GM12878 (cell line): ENCODE measurements at regions of chr17 and their contacts with region 1.

Region 1: DNA sequence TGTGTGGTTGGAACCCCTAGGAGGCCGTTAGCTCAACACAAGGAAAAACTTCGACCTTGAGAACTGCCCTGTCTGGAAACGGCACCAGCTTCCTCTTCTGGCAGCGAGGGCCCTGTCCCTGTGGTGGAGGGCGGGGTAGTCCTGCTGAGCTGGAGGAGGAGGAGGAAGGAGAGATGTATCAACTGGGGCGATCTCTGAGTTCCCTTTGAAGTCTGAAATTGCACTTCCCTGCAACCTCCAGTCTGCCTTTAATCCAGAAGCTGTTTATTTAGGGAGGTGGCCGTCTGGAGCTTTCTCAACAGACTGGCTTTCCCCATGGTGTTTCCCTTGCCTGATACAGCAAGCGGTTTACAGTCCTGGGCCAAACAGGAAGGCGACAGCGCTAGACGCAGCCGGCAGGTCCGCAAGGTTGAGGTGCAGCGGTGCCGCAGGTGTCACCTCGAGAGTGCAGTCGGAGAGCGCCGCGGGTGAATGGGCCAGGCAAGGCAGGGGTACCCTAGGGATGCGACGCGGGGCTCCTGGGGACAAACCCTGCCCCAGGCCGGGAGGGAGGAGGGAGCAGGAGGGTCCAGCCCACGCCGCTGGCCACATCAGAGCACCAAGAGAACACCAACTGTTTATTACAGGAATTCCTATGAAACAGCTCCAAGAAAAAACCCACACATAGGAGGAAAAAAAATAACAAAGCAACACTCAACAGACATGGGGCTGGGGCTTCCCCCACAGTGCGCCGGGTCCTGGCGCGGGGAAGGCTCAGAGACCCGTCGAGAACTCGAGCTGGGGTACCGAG is 11.4 kb upstream of the MRPS23 start:
- DNase-seq: no peak
- ATAC-seq: peak; percentile 67
- H3K4me3 ChIP-seq: peak overlapping the region; percentile 38; the same call in 1 of the 2 replicates
- H3K27ac ChIP-seq: no peak overlapping the region
- H3K4me1 ChIP-seq: peaks cover 3% of the 10 kb centered on the region; the same call in 1 of the 2 replicates
- H3K27me3 ChIP-seq: no peaks in the 10 kb centered on the region; a peak in 2 of 4 replicates
- CTCF ChIP-seq: no peak
- EP300 ChIP-seq: no peak
- POLR2A ChIP-seq: no peak
- RAD21 ChIP-seq: no peak

Region 2: GRCh38 chr17:57761887-57762286 is 99.3 kb before region 1 on chr17:
- CTCF ChIA-PET with region 1: no interaction called
- POLR2A ChIA-PET with region 1: no interaction called
- RAD21 ChIA-PET with region 1: no interaction called
- SMC1A ChIA-PET with region 1: no interaction called
- in situ Hi-C with region 1: no loop called
- intact Hi-C with region 1: no loop called
- DNase-seq: no peak
- ATAC-seq: no peak
- H3K4me3 ChIP-seq: no peak overlapping the region
- H3K27ac ChIP-seq: no peak overlapping the region
- H3K4me1 ChIP-seq: no peaks in the 10 kb centered on the region
- H3K27me3 ChIP-seq: peaks cover 0 to 2% of the 10 kb centered on the region in 2 experiments; a peak in 2 of 4 replicates
- CTCF ChIP-seq: no peak
- EP300 ChIP-seq: no peak
- POLR2A ChIP-seq: no peak
- RAD21 ChIP-seq: no peak

Region 3: DNA sequence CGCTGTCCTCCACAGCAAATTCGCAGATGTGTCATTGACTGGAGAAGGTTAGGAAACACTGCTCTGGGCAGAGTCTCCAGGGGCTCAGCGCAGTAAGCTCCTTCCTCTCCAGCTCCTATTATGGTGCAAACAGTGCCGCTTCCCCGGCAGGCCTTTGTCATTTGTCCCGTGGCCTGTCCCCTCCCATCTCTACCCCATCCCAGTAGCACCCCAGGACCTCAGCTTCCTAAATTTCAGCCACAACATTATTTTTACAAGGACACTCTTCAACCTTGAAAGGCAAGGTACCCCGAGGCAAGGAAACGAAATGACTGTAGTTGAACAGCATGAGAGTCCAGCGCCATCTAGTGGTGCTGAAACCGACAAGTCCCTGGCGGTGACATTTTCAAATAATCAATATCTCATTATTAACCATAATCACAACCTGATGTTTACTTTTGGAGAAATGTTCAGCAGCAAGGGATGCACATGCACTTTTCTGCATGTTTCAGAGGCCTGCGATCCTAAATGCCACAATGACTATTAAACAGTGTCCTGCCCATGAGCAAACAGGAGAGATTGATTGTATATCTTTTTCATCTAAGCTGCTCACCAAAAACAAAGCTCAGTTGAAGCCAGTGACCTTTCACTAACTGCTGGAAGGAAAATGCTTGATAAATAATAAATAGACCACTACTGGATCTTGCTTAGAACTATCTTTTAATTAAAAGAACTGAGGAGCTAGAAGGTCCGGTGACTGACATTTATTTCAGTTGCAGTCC is 27.8 kb before region 1 on chr17:
- CTCF ChIA-PET with region 1: interaction called, 21 read pairs
- POLR2A ChIA-PET with region 1: interaction called, 5 read pairs
- RAD21 ChIA-PET with region 1: no interaction called
- SMC1A ChIA-PET with region 1: no interaction called
- in situ Hi-C with region 1: no loop called
- intact Hi-C with region 1: no loop called
- DNase-seq: no peak
- ATAC-seq: peak; percentile 95
- H3K4me3 ChIP-seq: 0 out of 2 replicates have a peak overlapping the region, but pooled peaks have one; percentile 4
- H3K27ac ChIP-seq: no peak overlapping the region
- H3K4me1 ChIP-seq: peaks cover 5% of the 10 kb centered on the region; the same call in 1 of the 2 replicates
- H3K27me3 ChIP-seq: no peaks in the 10 kb centered on the region
- CTCF ChIP-seq: peak; percentile 87 to 94 (median 92)
- EP300 ChIP-seq: no peak
- POLR2A ChIP-seq: no peak
- RAD21 ChIP-seq: peak; percentile 74

Region 4: GRCh38 chr17:57875309-57876115 is 14.3 kb after region 1 on chr17:
- CTCF ChIA-PET with region 1: interaction called, 12 read pairs
- POLR2A ChIA-PET with region 1: interaction called, 3 read pairs
- RAD21 ChIA-PET with region 1: interaction called, 20 read pairs
- SMC1A ChIA-PET with region 1: interaction called, 12 read pairs
- in situ Hi-C with region 1: no loop called
- intact Hi-C with region 1: no loop called
- DNase-seq: no peak
- ATAC-seq: no peak
- H3K4me3 ChIP-seq: no peak overlapping the region
- H3K27ac ChIP-seq: no peak overlapping the region
- H3K4me1 ChIP-seq: peaks cover 8% of the 10 kb centered on the region
- H3K27me3 ChIP-seq: peaks cover 0 to 1% of the 10 kb centered on the region in 2 experiments; a peak in 2 of 4 replicates
- CTCF ChIP-seq: no peak
- EP300 ChIP-seq: no peak
- POLR2A ChIP-seq: no peak
- RAD21 ChIP-seq: 0 out of 2 replicates have a peak, but pooled peaks have one; percentile 5

Region 5: GRCh38 chr17:57902800-57903759 is 41.9 kb after region 1 on chr17:
- CTCF ChIA-PET with region 1: interaction called, 16 read pairs
- POLR2A ChIA-PET with region 1: no interaction called
- RAD21 ChIA-PET with region 1: interaction called, 19 read pairs
- SMC1A ChIA-PET with region 1: interaction called, 10 read pairs
- in situ Hi-C with region 1: no loop called
- intact Hi-C with region 1: no loop called
- DNase-seq: peak; percentile 89
- ATAC-seq: peak; percentile 82
- H3K4me3 ChIP-seq: peak overlapping the region; percentile 35; the same call in 1 of the 2 replicates
- H3K27ac ChIP-seq: peak overlapping the region; percentile 85
- H3K4me1 ChIP-seq: peaks cover 58% of the 10 kb centered on the region
- H3K27me3 ChIP-seq: no peaks in the 10 kb centered on the region
- CTCF ChIP-seq: no peak
- EP300 ChIP-seq: peak; percentile 53 to 77; a peak in 3 of 4 replicates
- POLR2A ChIP-seq: 0 out of 2 replicates have a peak, but pooled peaks have one; percentile 27
- RAD21 ChIP-seq: peak; percentile 26; the same call in 1 of the 2 replicates

Region 6: DNA sequence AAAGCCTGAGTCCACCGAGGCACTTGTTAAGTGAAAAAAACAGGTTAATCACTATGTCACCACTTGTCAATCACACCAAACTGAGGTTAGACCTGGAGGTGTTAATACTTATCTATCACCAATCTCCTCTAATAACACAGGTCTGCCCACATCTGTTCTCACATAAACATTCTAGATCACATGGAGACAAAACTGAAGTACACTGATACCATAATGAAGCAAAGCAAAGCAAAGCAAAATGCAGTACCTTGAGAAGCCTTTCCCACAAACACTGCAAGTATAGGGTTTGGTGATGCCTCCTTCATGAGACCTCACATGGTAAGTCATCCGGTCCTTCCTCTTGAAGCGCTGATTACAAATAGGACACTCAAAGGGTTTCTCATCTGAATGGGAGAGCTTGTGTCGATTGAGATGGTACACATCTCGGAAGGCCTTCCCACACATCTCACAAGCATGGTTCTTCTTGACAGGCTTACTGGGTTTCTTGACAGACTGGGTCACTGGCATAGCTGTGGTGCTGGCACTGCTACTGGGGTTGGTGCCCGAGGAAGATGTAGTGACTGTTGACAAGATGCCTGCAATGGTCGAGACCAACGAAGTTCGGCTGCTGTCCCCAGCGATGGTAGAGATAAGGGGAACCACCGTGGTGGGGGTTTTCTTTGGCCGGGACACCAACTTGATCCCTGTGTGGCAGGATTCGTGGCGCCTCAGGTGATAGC is 121.4 kb after region 1 on chr17:
- CTCF ChIA-PET with region 1: interaction called, 53 read pairs
- POLR2A ChIA-PET with region 1: interaction called, 5 read pairs
- RAD21 ChIA-PET with region 1: interaction called, 31 read pairs
- SMC1A ChIA-PET with region 1: interaction called, 30 read pairs
- in situ Hi-C with region 1: no loop called
- intact Hi-C with region 1: no loop called
- DNase-seq: no peak
- ATAC-seq: peak; percentile 13
- H3K4me3 ChIP-seq: 0 out of 2 replicates have a peak overlapping the region, but pooled peaks have one; percentile 5
- H3K27ac ChIP-seq: no peak overlapping the region
- H3K4me1 ChIP-seq: no peaks in the 10 kb centered on the region
- H3K27me3 ChIP-seq: no peaks in the 10 kb centered on the region
- CTCF ChIP-seq: no peak
- EP300 ChIP-seq: no peak
- POLR2A ChIP-seq: no peak
- RAD21 ChIP-seq: no peak

Region 7: GRCh38 chr17:58112970-58113631 is 251.9 kb after region 1 on chr17:
- CTCF ChIA-PET with region 1: interaction called, 87 read pairs
- POLR2A ChIA-PET with region 1: no interaction called
- RAD21 ChIA-PET with region 1: interaction called, 16 read pairs
- SMC1A ChIA-PET with region 1: interaction called, 31 read pairs
- in situ Hi-C with region 1: no loop called
- intact Hi-C with region 1: loop called (anchors 1 kb)
- DNase-seq: peak; percentile 37
- ATAC-seq: peak; percentile 92
- H3K4me3 ChIP-seq: no peak overlapping the region
- H3K27ac ChIP-seq: no peak overlapping the region
- H3K4me1 ChIP-seq: no peaks in the 10 kb centered on the region
- H3K27me3 ChIP-seq: peaks cover 0 to 3% of the 10 kb centered on the region in 2 experiments; a peak in 1 of 4 replicates
- CTCF ChIP-seq: peak; percentile 93 to 99 (median 98); a peak in 5 of 6 replicates
- EP300 ChIP-seq: no peak
- POLR2A ChIP-seq: no peak
- RAD21 ChIP-seq: peak; percentile 96